BJ (cell line): ENCODE measurements at regions of chr4 and their contacts with region 1.

Region 1: GRCh38 chr4:5791654-5792053 is 80.7 kb downstream of the EVC start:
- DNase-seq: no peak
- H3K4me3 ChIP-seq: no peak overlapping the region
- H3K27me3 ChIP-seq: no peaks in the 10 kb centered on the region
- CTCF ChIP-seq: no peak

Region 2: DNA sequence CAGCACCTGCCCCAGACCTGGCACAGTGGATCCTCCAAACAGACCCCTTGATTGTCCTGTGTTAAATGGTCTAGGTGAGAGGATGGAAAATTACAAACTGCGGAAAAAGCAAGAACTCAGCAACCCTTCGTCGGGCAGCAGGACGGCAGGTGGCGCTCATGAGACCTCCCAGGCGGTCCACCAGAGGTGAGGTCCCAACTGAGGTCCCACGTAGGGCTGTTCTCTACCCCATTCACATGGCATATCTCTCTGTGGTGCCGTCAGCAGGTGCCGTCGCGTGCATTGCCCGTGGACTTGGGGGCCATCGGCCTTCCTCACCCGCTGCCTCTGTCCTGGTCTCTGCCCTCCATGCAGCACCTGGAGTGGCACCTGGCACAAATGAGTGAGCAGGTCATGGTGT is 13.0 kb after region 1 on chr4:
- CTCF ChIA-PET with region 1: interaction called, 18 read pairs
- POLR2A ChIA-PET with region 1: no interaction called
- DNase-seq: no peak
- H3K4me3 ChIP-seq: no peak overlapping the region
- H3K27me3 ChIP-seq: no peaks in the 10 kb centered on the region
- CTCF ChIP-seq: no peak

Region 3: DNA sequence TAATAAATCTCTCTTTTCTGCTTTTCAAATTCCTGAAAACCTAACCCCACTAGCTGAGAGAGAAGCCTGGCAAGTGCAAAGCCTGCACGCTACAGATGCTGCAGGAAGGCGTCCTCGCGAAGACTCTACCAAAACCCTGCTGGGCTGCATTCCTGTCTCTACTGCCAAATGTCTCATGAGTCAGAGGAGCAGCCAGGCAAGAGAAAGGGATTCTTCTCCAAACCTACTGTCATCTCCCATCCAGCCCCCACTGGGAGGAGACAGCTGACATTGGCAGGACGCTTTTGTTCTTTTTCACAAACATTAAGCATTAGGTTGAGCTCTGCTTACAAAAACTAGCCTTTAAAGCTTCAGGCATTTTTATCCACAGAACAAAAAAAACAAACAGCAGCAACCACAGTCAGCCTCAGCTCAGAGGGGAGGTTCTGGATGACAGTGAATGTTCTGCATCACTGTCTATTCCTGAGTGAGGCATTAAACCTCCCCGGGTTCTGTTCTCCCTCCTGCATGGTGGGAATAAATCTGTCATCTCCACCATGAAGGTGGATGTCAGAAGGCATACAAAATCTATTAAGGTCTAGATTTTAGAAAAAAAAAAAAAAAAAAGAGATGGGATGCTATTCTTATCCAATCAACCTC is 83.3 kb after region 1 on chr4:
- CTCF ChIA-PET with region 1: no interaction called
- POLR2A ChIA-PET with region 1: no interaction called
- DNase-seq: no peak
- H3K4me3 ChIP-seq: no peak overlapping the region
- H3K27me3 ChIP-seq: no peaks in the 10 kb centered on the region; the same call in 1 of the 2 replicates
- CTCF ChIP-seq: no peak